MCF 10A (cell line): ENCODE measurements at regions of chr3 and their contacts with region 1.

Region 1: DNA sequence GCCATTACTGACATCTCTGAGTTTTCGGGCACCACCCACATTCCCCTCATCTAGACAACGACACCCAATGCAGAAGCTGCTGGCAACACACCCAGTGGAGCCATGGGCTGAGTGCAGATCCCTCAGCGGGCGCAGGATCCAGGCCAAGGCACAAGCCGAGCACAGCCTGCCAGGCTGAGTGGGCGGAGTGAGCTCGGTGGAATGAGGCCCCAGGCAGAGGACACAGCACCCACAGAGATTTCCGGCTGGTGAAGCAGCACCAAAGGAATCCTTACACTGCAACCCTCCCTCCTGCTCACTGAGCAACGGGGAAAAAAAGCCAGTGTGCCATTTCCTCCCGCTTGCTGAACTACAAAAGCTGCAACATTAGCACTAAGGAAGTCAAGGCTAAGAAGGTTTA is 34.3 kb downstream of the ZMAT3 start:
- DNase-seq: peak; percentile 96
- H3K4me3 Mint-ChIP-seq: no peak overlapping the region
- H3K27ac Mint-ChIP-seq: peak overlapping the region; percentile 92
- H3K4me1 Mint-ChIP-seq: no peaks in the 10 kb centered on the region
- H3K27me3 Mint-ChIP-seq: no peaks in the 10 kb centered on the region
- CTCF ChIP-seq: no peak

Region 2: GRCh38 chr3:178875836-178876235 is 161.5 kb before region 1 on chr3:
- CTCF ChIA-PET with region 1: no interaction called
- POLR2A ChIA-PET with region 1: no interaction called
- intact Hi-C with region 1: no loop called
- DNase-seq: no peak
- H3K4me3 Mint-ChIP-seq: no peak overlapping the region
- H3K27ac Mint-ChIP-seq: no peak overlapping the region
- H3K4me1 Mint-ChIP-seq: no peaks in the 10 kb centered on the region
- H3K27me3 Mint-ChIP-seq: no peaks in the 10 kb centered on the region
- CTCF ChIP-seq: no peak

Region 3: DNA sequence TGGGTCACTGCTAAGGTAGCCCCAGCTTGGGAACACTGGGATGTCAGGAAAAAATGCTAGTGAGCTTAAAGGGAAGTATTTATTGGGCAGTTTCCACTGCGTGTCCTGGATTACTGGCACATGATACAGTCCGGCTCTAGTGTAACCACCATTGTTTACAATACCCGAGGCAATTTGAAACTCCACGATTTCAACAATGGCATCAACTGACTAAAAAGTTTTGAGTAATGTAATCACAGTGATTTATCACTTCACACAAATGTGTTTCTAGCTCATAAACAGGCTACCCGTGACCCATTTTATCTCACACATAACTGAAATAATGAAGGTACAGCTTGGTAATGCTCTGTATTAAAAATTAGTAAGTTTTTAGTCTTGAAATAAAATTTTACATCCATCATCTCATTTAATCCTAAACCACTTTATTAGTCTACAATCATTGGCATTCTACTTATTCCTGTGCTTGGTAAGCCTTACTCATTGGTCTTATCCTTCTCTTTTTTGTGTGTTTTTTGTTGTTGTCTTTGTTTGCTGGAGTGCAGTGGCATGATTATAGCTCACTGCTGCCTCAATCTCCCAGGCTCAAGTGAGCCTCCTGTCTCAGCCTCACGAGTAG is 26.7 kb after region 1 on chr3:
- CTCF ChIA-PET with region 1: interaction called, 13 read pairs
- POLR2A ChIA-PET with region 1: interaction called, 32 read pairs
- intact Hi-C with region 1: no loop called
- DNase-seq: peak; percentile 82
- H3K4me3 Mint-ChIP-seq: peak overlapping the region; percentile 15
- H3K27ac Mint-ChIP-seq: peak overlapping the region; percentile 97
- H3K4me1 Mint-ChIP-seq: peaks cover 73% of the 10 kb centered on the region
- H3K27me3 Mint-ChIP-seq: no peaks in the 10 kb centered on the region
- CTCF ChIP-seq: no peak

Region 4: GRCh38 chr3:179113903-179114302 is 76.6 kb after region 1 on chr3:
- CTCF ChIA-PET with region 1: no interaction called
- POLR2A ChIA-PET with region 1: no interaction called
- intact Hi-C with region 1: no loop called
- DNase-seq: no peak
- H3K4me3 Mint-ChIP-seq: no peak overlapping the region
- H3K27ac Mint-ChIP-seq: no peak overlapping the region
- H3K4me1 Mint-ChIP-seq: no peaks in the 10 kb centered on the region
- H3K27me3 Mint-ChIP-seq: no peaks in the 10 kb centered on the region
- CTCF ChIP-seq: no peak